ENCODE measurements at regions of chr18 and their contacts with region 1.

Region 1: DNA sequence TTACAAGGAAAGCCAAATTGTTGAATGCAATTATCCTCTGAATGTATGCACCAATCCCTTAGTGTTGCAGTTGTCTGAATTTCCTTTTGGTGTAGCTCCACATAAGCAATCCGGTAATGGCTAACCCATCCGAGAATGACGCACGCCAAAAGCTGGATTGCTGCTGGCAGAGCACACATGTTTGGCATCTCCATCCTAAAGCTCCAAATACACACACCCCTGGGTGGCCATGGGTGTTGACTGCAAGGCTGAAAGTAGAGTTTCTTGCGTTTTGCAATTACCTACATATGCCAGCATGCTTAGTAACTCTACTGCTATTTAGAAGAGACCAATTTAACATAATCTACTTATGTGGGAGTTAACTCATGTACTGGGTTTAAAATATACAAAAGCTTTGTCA is 53.1 kb downstream of the KCTD1 start:
- DNase-seq: no peak
- H3K4me3 ChIP-seq: no peak overlapping the region
- H3K27ac ChIP-seq: no peak overlapping the region
- H3K4me1 ChIP-seq: no peaks in the 10 kb centered on the region
- H3K27me3 ChIP-seq: no peaks in the 10 kb centered on the region
- CTCF ChIP-seq: no peak

Region 2: DNA sequence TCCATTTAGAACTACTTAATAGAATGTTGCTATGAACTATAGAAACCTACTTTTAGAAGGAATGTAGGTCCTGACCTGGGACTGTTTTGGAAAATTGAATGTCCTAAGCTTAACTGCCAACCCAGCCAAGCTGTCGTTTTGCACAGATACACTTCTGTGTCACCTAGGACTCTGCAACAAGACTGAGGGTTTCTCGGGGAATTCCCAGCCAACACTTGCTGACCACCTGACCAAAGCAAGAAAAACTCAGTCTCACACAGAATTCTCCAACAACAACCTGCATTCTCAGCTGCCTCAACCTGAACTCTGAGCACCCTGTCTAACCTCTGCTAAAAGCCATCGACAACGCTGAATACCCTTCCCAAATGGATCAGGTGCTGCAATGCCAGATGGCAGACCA is 533.1 kb before region 1 on chr18:
- intact Hi-C with region 1: no loop called
- DNase-seq: no peak
- H3K4me3 ChIP-seq: no peak overlapping the region
- H3K27ac ChIP-seq: no peak overlapping the region
- H3K4me1 ChIP-seq: no peaks in the 10 kb centered on the region
- H3K27me3 ChIP-seq: no peaks in the 10 kb centered on the region
- CTCF ChIP-seq: no peak

Region 3: GRCh38 chr18:26460449-26461091 is 34.7 kb before region 1 on chr18:
- intact Hi-C with region 1: loop called (anchors 5 kb)
- DNase-seq: no peak
- H3K4me3 ChIP-seq: no peak overlapping the region
- H3K27ac ChIP-seq: no peak overlapping the region
- H3K4me1 ChIP-seq: no peaks in the 10 kb centered on the region
- H3K27me3 ChIP-seq: no peaks in the 10 kb centered on the region
- CTCF ChIP-seq: no peak

Measured in ascending aorta (tissue), 2 donors.